Activated CD8-positive, alpha-beta T cell treated with anti-CD3 and anti-CD28 coated beads for 36 hours (primary cell): ENCODE measurements at regions of chr16 and their contacts with region 1.

Region 1: DNA sequence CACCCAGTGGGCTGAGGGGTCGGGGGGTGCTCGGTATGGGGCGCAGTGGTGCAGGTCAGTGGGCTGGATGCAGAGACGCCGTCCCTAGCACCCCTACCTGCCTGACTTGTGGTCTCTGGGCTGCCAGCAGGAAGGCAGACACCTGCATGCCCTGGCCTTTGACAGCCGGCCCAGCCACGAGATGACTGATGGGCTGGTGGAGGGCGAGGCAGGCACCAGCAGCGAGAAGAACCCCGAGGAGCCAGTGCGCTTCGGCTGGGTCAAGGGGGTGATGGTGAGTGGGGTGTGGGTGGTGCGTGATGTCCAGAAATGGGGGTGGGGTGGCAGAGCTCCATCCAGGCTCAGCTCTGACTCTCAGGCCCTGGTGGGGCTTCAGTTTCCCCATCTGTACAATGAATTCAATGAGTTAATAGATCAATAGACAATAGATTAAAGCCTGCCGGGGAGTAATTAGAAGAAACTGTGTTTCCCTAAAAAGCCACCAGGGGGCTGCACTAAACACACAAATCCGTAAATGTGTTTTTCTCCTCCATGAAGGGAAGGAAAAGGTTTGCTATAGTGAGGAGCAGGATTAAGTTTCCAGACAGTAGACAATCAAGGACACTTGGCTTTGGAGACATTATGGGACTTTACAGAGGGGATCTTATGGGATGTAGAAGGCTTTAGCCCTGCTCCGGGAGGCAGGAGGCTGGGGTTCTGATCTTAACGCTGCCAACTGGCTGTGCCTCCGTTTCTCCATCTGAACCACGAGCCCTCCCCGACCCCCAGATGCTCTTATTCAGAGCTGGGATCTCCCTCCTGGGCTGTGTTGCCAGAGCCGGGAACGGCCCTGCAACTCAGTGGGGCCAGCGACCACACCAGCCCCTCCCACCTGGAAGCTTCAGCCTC is 2.2 kb downstream of the SLC12A3 start:
- DNase-seq: peak; percentile 66
- ATAC-seq: peak; percentile 55
- H3K4me3 Mint-ChIP-seq: no peak overlapping the region
- H3K27ac Mint-ChIP-seq: no peak overlapping the region
- H3K4me1 Mint-ChIP-seq: peaks cover 11% of the 10 kb centered on the region
- H3K27me3 Mint-ChIP-seq: no peaks in the 10 kb centered on the region
- CTCF ChIP-seq: peak; percentile 90

Region 2: GRCh38 chr16:56851671-56852400 is 15.4 kb before region 1 on chr16:
- CTCF ChIA-PET with region 1: interaction called, 77 read pairs
- POLR2A ChIA-PET with region 1: no interaction called
- intact Hi-C with region 1: no loop called
- DNase-seq: no peak
- ATAC-seq: no peak
- H3K4me3 Mint-ChIP-seq: no peak overlapping the region
- H3K27ac Mint-ChIP-seq: no peak overlapping the region
- H3K4me1 Mint-ChIP-seq: peaks cover 23% of the 10 kb centered on the region
- H3K27me3 Mint-ChIP-seq: no peaks in the 10 kb centered on the region
- CTCF ChIP-seq: peak; percentile 52

Region 3: GRCh38 chr16:56898847-56899246 is 31.7 kb after region 1 on chr16:
- CTCF ChIA-PET with region 1: interaction called, 11 read pairs
- POLR2A ChIA-PET with region 1: no interaction called
- intact Hi-C with region 1: no loop called
- DNase-seq: peak; percentile 42
- ATAC-seq: peak; percentile 83
- H3K4me3 Mint-ChIP-seq: no peak overlapping the region
- H3K27ac Mint-ChIP-seq: no peak overlapping the region
- H3K4me1 Mint-ChIP-seq: peaks cover 18% of the 10 kb centered on the region
- H3K27me3 Mint-ChIP-seq: peaks cover 3% of the 10 kb centered on the region
- CTCF ChIP-seq: no peak

Region 4: DNA sequence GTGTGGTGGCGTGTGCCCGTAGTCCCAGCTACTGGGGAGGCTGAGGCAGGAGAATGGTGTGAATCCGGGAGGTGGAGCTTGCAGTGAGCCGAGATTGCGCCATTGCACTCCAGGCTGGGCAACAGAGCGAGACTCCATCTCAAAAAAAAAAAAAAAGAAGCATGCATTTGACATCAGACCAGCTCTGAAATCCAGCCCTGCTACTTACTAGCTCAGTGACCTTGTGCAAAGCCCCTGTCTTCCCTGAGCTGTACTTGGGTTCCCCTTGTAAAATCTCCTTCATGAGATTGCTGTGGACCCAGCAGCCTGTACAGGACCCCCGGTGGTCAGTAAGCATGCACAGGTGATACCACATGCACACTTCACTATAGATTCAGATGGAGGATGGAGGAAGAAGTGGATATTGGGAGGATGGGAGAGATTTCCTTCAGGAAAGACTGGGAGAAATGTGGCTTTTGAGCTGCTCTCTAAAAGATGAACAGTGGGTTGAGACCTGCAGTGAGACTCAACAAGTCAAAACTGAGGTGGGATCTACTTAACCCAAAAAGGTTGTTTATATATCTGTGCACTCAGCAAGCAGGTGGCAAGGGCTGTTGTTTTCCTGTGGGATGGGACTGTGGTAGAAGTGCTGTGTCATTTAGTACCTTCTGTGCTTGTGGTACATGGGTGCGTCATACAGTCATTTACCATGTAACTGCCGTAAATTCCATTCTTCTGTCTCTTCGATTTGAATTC is 71.4 kb after region 1 on chr16:
- CTCF ChIA-PET with region 1: interaction called, 8 read pairs
- POLR2A ChIA-PET with region 1: interaction called, 4 read pairs
- intact Hi-C with region 1: loop called (anchors 5 kb)
- DNase-seq: peak; percentile 85
- ATAC-seq: peak; percentile 77
- H3K4me3 Mint-ChIP-seq: peak overlapping the region; percentile 54
- H3K27ac Mint-ChIP-seq: peak overlapping the region; percentile 95
- H3K4me1 Mint-ChIP-seq: peaks cover 81% of the 10 kb centered on the region
- H3K27me3 Mint-ChIP-seq: no peaks in the 10 kb centered on the region
- CTCF ChIP-seq: no peak

Region 5: DNA sequence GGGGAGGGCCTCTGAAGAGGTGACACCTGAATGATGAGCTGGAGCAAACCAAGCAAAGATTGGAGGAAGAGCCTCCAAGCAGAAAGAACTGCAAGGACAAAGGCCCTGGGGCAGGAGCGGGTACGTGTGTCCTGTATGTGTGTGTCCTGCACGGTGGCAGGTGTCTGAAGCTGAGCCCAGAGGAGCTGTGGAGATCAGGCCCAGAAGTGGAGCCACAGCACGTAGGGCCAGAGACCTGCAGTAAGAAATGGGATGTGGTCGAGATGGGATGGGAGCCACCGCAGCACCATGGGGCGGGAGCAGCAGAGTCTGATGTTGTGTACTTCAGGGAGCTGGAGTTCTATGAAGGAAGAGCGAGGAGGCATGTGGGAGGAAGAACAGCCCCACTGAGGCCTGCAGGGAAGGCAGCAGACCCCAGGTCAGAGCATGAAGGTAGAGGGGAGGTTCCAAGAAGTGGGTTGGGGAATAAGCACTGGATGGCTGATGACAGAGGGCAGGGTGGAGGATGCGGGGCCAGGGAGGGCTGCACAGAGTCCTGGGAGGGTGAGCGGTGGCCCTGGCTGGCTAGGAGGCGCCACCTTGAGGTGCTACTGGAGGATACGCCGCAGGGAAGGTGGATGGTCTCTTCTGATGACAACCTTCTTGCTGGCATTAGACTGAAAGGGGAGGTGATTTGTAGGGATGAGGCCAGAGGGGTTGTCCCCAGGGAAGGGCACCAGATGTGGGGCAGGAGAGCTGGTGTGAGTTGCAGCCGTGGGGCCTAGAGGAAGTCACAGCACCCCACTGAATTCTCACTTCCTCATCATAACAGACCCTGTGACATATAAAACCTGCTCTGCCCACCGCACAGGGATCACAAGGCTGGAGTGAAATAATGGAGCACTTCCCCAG is 83.9 kb after region 1 on chr16:
- CTCF ChIA-PET with region 1: interaction called, 108 read pairs
- POLR2A ChIA-PET with region 1: interaction called, 5 read pairs
- intact Hi-C with region 1: loop called (anchors 1 kb)
- DNase-seq: peak; percentile 82
- ATAC-seq: peak; percentile 95
- H3K4me3 Mint-ChIP-seq: no peak overlapping the region
- H3K27ac Mint-ChIP-seq: peak overlapping the region; percentile 10
- H3K4me1 Mint-ChIP-seq: peaks cover 19% of the 10 kb centered on the region
- H3K27me3 Mint-ChIP-seq: no peaks in the 10 kb centered on the region
- CTCF ChIP-seq: peak; percentile 80

Region 6: DNA sequence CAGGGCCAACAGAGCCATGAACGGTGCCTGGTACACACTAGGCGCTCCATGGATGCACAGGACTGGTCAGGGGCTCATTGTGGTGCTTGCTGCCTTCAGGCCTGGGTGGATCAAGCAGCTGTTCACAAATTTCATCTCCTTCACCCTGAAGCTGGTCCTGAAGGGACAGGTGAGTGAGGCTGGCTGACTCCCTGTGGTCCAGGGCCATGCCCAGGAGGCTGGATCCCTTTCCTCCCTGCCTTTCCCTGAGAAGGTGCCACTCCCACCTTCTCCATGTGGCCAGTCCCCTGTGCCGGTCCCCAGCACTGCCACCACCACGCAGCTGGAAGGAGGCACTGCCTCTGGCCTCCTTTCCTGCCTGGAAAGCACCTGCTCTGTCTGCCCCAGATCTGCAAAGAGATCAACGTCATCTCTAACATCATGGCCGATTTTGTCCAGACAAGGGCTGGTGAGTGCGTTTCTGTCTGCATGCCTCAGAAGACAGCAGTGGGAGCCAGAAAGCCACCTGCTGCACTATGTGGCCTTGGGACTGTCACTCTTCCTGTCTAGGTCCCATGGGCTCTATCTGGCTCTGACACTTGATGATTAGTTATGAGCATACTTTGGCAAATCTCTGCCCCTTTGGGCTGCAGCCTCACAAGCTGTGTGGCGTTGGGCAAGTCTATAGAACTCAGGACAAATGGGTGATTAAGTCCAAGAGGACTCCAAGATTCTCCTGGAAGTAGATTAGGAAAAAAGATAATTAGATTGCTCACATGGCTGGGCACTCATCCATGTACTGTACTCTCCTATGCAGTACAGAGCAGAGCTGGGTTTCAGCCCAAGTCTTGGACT is 104.0 kb after region 1 on chr16:
- CTCF ChIA-PET with region 1: no interaction called
- POLR2A ChIA-PET with region 1: no interaction called
- intact Hi-C with region 1: no loop called
- DNase-seq: no peak
- ATAC-seq: no peak
- H3K4me3 Mint-ChIP-seq: no peak overlapping the region
- H3K27ac Mint-ChIP-seq: no peak overlapping the region
- H3K4me1 Mint-ChIP-seq: peaks cover 37% of the 10 kb centered on the region
- H3K27me3 Mint-ChIP-seq: no peaks in the 10 kb centered on the region
- CTCF ChIP-seq: no peak

Region 7: DNA sequence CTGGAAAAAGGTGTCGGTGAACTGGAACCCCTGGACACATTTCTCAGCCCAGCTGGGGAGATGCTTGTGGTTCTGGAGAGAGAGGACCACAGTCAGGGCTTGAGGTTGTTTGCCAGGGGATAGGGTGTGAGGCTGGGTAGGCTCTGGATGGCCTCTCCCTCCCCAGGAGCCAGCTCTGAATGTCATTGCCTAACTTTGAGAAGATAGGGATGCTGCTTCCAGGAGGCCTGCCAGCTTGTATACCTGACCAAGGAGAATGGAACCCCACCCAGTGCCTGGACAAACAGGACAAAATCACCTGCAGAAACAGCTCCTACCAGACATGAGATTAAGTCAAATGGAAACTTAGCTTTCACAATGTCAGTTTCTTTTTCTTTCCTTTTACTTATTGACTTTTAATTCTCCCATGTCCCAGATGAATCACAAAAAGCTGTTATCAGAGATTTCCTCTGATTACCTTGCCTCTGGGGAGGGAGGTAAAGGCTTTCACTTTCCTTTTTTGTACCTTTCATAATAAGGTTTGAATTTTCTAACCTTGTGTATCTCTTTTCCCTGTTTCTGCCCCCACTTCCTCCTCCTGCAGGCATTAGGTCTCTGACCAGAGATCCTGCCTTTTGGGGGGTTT is 447.1 kb after region 1 on chr16:
- CTCF ChIA-PET with region 1: no interaction called
- POLR2A ChIA-PET with region 1: no interaction called
- intact Hi-C with region 1: no loop called
- DNase-seq: no peak
- ATAC-seq: peak; percentile 81
- H3K4me3 Mint-ChIP-seq: no peak overlapping the region
- H3K27ac Mint-ChIP-seq: peak overlapping the region; percentile 43
- H3K4me1 Mint-ChIP-seq: peaks cover 25% of the 10 kb centered on the region
- H3K27me3 Mint-ChIP-seq: no peaks in the 10 kb centered on the region
- CTCF ChIP-seq: no peak